Dendritic cell treated with granulocyte-macrophage colony-stimulating factor and Interleukin-4, amounts not matched to agents 40 ng/mL and 50 ng/mL, for 4 days (primary cell): ENCODE measurements at regions of chr2 and their contacts with region 1.

Region 1: GRCh38 chr2:222318026-222318711 is 19.4 kb upstream of the PAX3 start:
- H3K4me3 Mint-ChIP-seq: peak overlapping the region; percentile 81
- H3K27ac Mint-ChIP-seq: no peak overlapping the region
- H3K4me1 Mint-ChIP-seq: peaks cover 15% of the 10 kb centered on the region
- H3K27me3 Mint-ChIP-seq: peaks cover 72% of the 10 kb centered on the region

Region 2: DNA sequence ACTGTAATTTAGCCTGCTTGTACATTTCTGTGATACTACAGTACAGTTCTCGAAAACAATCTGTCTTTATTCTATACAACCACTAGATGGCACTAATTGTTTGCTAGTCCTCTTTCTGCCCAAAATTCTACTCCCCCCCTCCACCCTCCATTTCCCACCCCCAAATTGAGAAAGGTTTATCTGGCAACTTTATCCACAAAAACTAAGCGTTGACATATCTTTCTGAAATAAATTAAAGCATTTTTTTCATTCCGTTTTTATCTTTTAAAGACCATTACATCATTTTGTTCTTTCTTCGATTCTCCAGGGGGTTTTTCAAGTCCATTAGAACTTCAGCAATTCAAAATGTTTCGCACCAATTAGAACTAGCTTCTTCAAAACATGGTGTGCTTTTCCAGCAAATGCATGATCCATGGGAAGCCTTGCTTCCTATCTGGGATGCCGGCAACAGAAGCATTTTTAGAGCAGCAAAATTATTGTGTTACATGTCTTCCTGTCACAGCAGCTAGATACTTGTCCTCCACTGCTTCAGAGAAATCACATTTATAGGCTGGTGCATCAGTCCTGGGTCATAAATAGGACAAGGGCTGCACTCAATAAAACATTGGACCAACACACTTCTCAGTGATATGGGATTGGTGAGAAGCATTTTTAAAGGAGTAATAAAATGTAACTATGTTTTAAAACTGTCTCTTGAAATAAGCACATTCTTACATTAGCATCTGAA is 260.7 kb before region 1 on chr2:
- intact Hi-C with region 1: loop called (anchors 10 kb)
- H3K4me3 Mint-ChIP-seq: no peak overlapping the region
- H3K27ac Mint-ChIP-seq: no peak overlapping the region
- H3K4me1 Mint-ChIP-seq: no peaks in the 10 kb centered on the region
- H3K27me3 Mint-ChIP-seq: peaks cover 28% of the 10 kb centered on the region

Region 3: DNA sequence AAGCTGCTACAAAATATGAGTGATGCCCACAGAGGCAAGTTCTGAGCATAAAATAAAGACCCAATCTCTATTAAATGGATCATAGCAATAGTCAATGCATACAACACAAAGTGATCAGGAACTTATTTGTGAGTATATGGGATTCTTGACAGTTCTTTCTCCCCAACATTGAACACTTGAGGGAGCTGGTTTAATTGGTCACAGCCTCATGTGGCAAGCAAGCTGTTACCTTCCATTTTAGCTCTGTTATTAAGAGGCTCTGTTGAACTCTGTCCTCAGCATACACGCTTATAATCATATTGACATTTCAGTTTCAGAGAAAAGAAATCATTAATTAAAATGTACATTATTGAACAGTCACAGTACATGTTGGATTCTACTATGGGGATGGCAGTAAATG is 18.3 kb after region 1 on chr2:
- intact Hi-C with region 1: no loop called
- H3K4me3 Mint-ChIP-seq: no peak overlapping the region
- H3K27ac Mint-ChIP-seq: no peak overlapping the region
- H3K4me1 Mint-ChIP-seq: peaks cover 11% of the 10 kb centered on the region
- H3K27me3 Mint-ChIP-seq: no peaks in the 10 kb centered on the region

Region 4: GRCh38 chr2:222404151-222404905 is 86.2 kb after region 1 on chr2:
- intact Hi-C with region 1: loop called (anchors 10 kb)
- H3K4me3 Mint-ChIP-seq: no peak overlapping the region
- H3K27ac Mint-ChIP-seq: peak overlapping the region; percentile 89
- H3K4me1 Mint-ChIP-seq: peaks cover 11% of the 10 kb centered on the region
- H3K27me3 Mint-ChIP-seq: no peaks in the 10 kb centered on the region

Region 5: DNA sequence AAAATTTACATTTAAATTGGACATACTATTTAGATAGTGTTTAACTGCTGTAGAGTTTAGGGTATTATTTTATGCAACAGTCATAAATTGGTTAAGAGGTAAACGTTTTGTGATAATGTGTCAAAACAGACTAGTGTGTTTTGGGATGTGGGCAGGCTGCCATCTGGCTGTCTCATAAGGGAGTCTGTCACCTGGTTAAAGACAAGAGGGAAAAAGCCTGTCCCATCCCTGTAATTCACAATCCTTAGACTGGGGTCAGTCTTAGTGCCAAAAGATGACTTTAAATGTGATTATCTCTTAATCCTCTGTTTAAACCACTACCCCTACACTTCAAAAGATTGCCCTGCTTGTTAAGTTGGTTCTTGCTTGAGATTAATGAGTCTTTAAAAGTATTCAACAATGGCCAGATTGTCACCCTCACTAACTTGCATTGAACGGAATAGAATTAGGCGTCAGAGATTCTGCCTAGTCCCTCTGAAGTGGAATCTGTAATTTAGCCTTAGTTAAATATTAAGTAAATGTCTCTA is 165.4 kb after region 1 on chr2:
- intact Hi-C with region 1: loop called (anchors 5 kb)
- H3K4me3 Mint-ChIP-seq: no peak overlapping the region
- H3K27ac Mint-ChIP-seq: no peak overlapping the region
- H3K4me1 Mint-ChIP-seq: no peaks in the 10 kb centered on the region
- H3K27me3 Mint-ChIP-seq: peaks cover 16% of the 10 kb centered on the region

Region 6: DNA sequence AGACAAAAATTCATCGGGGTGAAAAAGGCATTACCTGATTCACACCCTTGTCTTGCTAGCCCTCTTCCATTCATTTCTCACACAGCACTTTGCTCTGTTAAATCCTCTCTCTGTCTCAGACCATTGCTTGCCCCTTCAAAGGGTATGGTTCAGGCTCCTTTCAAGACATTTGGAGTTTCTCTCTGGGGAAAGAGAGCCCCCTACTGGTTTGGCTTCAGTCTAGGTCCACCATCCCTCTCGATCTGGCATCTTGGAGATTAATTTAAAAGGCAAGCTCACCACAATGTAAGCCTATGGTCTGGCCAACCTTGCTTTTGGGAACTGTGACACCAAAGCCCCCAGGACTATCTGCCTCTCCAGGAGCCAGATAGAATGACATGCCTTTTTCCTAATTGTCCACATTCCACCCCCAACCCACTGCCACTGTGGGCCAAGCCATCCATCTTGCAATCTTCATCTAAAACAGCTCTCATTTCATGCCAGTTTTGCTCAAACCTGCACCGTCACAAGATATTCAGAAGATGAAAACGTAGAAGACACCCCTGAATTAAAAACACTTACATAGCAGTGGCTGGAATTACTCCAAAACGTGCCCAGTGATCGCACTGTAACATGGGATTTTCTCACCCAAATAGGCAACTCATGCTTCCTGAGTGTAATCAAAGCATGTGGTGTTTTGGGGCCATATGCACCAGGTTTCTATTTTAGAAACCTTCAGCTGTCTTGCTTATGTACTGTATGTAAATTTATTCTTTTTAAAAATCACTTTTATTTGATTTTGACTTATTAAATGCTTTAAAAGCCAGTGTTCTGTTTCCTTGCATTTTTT is 243.9 kb after region 1 on chr2:
- intact Hi-C with region 1: loop called (anchors 1 kb)
- H3K4me3 Mint-ChIP-seq: no peak overlapping the region
- H3K27ac Mint-ChIP-seq: no peak overlapping the region
- H3K4me1 Mint-ChIP-seq: no peaks in the 10 kb centered on the region
- H3K27me3 Mint-ChIP-seq: peaks cover 3% of the 10 kb centered on the region

Region 7: GRCh38 chr2:222613715-222614331 is 295.7 kb after region 1 on chr2:
- intact Hi-C with region 1: loop called (anchors 2 kb)
- H3K4me3 Mint-ChIP-seq: no peak overlapping the region
- H3K27ac Mint-ChIP-seq: no peak overlapping the region
- H3K4me1 Mint-ChIP-seq: no peaks in the 10 kb centered on the region
- H3K27me3 Mint-ChIP-seq: no peaks in the 10 kb centered on the region